ENCODE measurements at regions of chr1 and their contacts with region 1.

Region 1: GRCh38 chr1:28668191-28668955 is at the start of gene GMEB1:
- DNase-seq: peak; percentile 95 to 100 (median 98)
- ATAC-seq: peak; percentile 91
- H3K4me3 ChIP-seq: peak within 1 kb of the TSS; percentile 98
- H3K27ac ChIP-seq: peak within 1 kb of the TSS; percentile 95
- H3K4me1 ChIP-seq: peaks cover 3 to 28% of the 10 kb centered on the region in 2 experiments; a peak in 4 of 5 replicates
- H3K27me3 ChIP-seq: no peaks in the 10 kb centered on the region
- CTCF ChIP-seq: peak in 1 of 3 experiments; percentile 9; a peak in 1 of 6 replicates
- EP300 ChIP-seq: no peak
- POLR2A ChIP-seq: peak; percentile 62; the same call in 1 of the 2 replicates
- RAD21 ChIP-seq: no peak
- polyA plus RNA-seq, gene GMEB1: 8.5 TPM

Region 2: DNA sequence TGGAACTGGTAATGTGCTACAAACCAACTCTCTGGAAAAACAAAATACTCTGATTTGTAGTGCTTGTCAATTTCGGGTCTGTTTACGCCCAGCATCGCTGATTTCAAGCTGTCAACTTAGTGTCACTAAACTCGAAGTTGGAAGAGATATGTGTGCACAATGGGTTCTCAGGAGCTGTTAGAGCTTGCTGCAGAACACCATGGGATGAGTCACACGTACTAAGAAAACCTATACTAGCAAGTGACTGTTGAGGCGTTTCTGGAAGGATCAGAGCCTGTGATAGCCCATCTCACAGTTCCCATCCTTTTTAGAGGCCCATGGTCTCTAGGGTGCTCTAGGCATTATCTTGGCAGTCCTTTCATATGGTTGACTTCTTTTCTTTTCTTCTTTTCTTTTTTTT is 14.5 kb after region 1 on chr1:
- CTCF ChIA-PET with region 1: no interaction called
- POLR2A ChIA-PET with region 1: interaction called, 16 read pairs
- in situ Hi-C with region 1: no loop called
- intact Hi-C with region 1: no loop called
- DNase-seq: peak in 3 of 4 experiments; percentile 6 to 47 (median 11)
- ATAC-seq: no peak; the same call in 2 of the 3 replicates
- H3K4me3 ChIP-seq: no peak overlapping the region
- H3K27ac ChIP-seq: no peak overlapping the region
- H3K4me1 ChIP-seq: peaks cover 5 to 13% of the 10 kb centered on the region in 2 experiments; a peak in 4 of 5 replicates
- H3K27me3 ChIP-seq: no peaks in the 10 kb centered on the region
- CTCF ChIP-seq: no peak
- EP300 ChIP-seq: no peak
- POLR2A ChIP-seq: no peak
- RAD21 ChIP-seq: no peak

Region 3: DNA sequence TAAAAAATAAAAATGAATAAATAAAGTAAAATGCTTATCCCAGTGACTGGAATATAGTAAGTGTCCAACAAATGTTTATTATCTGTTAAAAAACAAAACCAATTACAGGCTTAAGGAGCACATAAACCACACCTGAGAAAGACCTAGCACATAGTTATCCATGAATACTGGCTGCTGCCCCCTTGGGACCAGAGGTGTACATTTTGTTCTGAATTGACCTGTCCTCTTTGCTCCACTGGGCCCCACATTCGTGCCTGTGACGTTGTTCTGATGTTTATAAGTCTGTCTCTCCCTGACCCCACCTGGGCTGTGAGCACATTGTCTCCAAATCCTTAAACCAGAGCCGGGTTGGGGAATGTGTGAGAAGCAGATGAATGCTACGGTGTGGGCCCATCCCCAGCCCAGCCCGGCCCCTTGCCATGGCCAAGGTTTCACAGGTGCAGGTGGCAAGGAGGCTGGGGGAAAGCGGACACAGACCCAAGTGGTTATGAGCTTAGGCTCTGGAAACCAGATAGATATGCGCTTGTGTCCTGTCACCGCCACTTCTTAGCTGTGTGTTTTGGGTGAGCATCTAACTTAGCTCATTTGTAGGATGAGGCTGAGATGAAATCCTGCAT is 172.7 kb after region 1 on chr1:
- CTCF ChIA-PET with region 1: no interaction called
- POLR2A ChIA-PET with region 1: no interaction called
- in situ Hi-C with region 1: no loop called
- intact Hi-C with region 1: no loop called
- DNase-seq: peak in 1 of 4 experiments; percentile 28
- ATAC-seq: peak; percentile 73
- H3K4me3 ChIP-seq: no peak overlapping the region
- H3K27ac ChIP-seq: no peak overlapping the region
- H3K4me1 ChIP-seq: no peaks in the 10 kb centered on the region
- H3K27me3 ChIP-seq: peaks cover 21 to 36% of the 10 kb centered on the region in 2 experiments
- CTCF ChIP-seq: peak; percentile 19 to 45 (median 36); a peak in 4 of 6 replicates
- EP300 ChIP-seq: no peak
- POLR2A ChIP-seq: no peak
- RAD21 ChIP-seq: no peak; a peak in 1 of 4 replicates

Region 4: GRCh38 chr1:28926629-28927265 is 258.4 kb after region 1 on chr1:
- CTCF ChIA-PET with region 1: no interaction called
- POLR2A ChIA-PET with region 1: no interaction called
- in situ Hi-C with region 1: no loop called
- intact Hi-C with region 1: no loop called
- DNase-seq: peak; percentile 56 to 91 (median 72)
- ATAC-seq: peak; percentile 89
- H3K4me3 ChIP-seq: no peak overlapping the region
- H3K27ac ChIP-seq: peak overlapping the region; percentile 86
- H3K4me1 ChIP-seq: peaks cover 30 to 34% of the 10 kb centered on the region in 2 experiments; a peak in 4 of 5 replicates
- H3K27me3 ChIP-seq: no peaks in the 10 kb centered on the region
- CTCF ChIP-seq: no peak
- EP300 ChIP-seq: peak; percentile 99
- POLR2A ChIP-seq: no peak; the same call in 1 of the 2 replicates
- RAD21 ChIP-seq: peak in 1 of 2 experiments; percentile 20; a peak in 2 of 4 replicates

Measured in K562 (cell line).